ENCODE measurements at regions of chr18 and their contacts with region 1.

Region 1: GRCh38 chr18:57959278-57959677 is 84.7 kb upstream of the NEDD4L start:
- DNase-seq: peak; percentile 84
- H3K4me3 Mint-ChIP-seq: no peak overlapping the region
- H3K27ac Mint-ChIP-seq: no peak overlapping the region
- H3K4me1 Mint-ChIP-seq: peaks cover 6% of the 10 kb centered on the region
- H3K27me3 Mint-ChIP-seq: no peaks in the 10 kb centered on the region
- CTCF ChIP-seq: peak; percentile 53

Region 2: DNA sequence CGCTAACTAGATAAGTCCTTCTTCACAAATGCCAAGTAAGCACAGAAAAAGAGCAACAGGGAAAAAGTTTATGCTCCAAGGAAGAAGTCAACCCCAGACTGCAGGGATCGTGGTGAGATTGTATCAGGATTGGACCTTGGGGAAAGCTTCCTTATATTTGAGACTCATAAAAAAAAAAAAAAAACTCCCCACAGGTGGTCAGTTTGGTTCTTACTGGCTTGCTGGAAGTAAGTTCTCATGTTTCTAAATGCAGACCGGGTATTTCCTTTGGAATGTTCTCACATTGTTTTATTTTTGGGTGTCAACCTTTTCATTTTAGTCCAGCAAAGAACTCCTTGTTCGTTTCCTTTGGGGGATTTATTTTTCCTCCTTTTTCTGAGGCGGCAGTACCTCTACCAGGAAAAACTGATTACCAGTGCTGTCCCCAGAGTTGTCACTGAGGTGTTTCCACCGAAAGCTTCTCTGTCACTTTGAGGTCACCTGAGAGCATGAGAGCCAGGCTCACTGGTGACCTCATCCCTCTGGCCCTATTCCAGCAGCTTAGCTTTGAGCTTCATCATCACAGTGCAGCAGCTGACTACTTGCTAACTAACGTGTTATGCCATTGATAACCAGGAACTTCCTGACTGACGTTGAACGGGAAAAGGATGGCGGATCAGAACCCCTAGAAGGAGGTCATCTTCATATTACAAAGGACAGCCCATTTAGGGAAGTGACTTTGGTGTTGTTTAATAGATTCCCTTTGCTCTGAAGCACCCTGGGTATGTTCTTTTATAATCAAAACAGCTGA is 139.4 kb before region 1 on chr18:
- CTCF ChIA-PET with region 1: no interaction called
- POLR2A ChIA-PET with region 1: no interaction called
- intact Hi-C with region 1: no loop called
- DNase-seq: peak; percentile 81
- H3K4me3 Mint-ChIP-seq: peak overlapping the region; percentile 43
- H3K27ac Mint-ChIP-seq: peak overlapping the region; percentile 80
- H3K4me1 Mint-ChIP-seq: peaks cover 15% of the 10 kb centered on the region
- H3K27me3 Mint-ChIP-seq: no peaks in the 10 kb centered on the region
- CTCF ChIP-seq: no peak

Region 3: DNA sequence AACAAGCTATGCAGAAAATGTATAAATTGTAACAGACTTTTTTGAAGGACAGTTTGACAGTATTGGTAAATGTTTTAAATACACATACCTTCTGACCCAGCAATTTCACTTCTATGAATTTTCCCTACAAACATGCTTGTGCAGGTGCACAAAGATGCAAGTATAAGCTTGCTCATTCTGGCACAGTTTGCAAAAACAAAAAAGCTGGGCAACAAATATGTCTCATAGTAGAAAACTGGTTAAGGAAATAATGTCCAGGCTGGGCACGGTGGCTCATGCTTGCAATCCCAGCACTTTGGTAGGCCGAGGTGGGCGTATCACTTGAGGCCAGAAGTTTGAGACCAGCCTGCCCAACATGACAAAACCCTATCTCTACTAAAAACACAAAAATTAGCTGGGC is 12.2 kb before region 1 on chr18:
- CTCF ChIA-PET with region 1: interaction called, 11 read pairs
- POLR2A ChIA-PET with region 1: interaction called, 9 read pairs
- intact Hi-C with region 1: no loop called
- DNase-seq: peak; percentile 83
- H3K4me3 Mint-ChIP-seq: no peak overlapping the region
- H3K27ac Mint-ChIP-seq: no peak overlapping the region
- H3K4me1 Mint-ChIP-seq: peaks cover 17% of the 10 kb centered on the region
- H3K27me3 Mint-ChIP-seq: no peaks in the 10 kb centered on the region
- CTCF ChIP-seq: no peak

Region 4: DNA sequence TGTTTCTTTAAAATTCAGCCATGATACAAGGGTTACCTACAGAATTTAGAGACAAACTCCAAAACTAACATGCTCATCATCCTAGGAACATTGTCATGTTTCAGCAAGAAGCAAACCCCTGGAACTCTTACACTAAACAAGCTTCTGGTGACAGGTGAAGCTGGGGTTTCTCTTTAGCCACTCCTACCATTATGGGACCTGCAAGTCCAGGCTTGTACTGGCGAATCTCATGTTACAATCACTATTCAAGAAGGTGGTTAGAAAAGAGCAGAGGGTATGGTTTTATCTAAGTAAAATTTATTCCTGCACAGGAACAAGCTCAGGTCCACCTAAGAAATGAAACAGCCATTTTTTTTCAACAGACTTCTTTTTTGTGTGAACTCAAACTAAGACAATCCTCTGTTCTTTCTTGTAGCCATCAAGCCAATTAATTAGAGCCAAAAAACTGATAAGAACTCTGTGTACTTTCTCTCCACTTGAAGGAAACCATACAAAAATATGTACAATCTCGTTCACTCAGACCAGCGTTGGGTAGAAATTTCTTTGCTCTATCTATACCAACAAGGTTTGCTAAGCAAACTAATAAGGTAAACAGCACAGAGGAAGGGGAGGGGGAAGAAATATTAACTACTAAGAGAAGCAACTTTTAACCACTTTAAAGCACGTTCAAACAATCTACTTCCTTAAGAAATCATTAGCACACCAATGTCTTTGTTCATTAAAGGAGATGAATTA is 21.5 kb after region 1 on chr18:
- CTCF ChIA-PET with region 1: interaction called, 11 read pairs
- POLR2A ChIA-PET with region 1: interaction called, 4 read pairs
- intact Hi-C with region 1: no loop called
- DNase-seq: peak; percentile 55
- H3K4me3 Mint-ChIP-seq: no peak overlapping the region
- H3K27ac Mint-ChIP-seq: peak overlapping the region; percentile 30
- H3K4me1 Mint-ChIP-seq: peaks cover 16% of the 10 kb centered on the region
- H3K27me3 Mint-ChIP-seq: no peaks in the 10 kb centered on the region
- CTCF ChIP-seq: no peak

Region 5: DNA sequence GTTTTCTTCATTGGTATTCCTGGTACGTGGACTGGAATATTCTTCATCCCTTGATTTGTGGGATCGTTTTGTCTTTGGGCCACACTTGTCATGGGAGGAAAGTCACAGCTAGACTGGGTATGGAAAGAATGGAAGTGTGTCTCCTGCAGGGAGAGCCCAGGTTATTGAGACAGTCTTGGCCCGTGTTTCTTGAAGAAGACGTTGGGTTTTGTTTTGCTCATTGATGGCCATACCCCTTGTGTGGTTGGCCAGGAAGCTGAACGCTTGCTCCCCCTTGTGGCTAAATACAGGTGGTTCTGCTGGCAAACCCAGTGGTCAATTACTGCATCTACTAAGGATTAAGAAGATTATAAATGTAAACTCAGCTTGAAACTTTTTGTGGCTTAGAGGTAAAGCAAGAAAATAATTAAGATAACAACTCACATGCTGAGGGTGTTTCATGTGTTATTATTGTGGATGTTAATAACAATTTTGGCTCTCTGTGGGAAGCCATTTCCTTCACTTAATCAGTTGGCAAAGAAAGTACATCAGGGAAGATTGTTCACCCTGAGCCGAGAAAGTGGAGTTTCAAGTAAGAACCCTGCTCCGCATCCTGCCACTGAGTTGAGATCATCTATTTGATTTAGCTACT is 176.5 kb after region 1 on chr18:
- CTCF ChIA-PET with region 1: interaction called, 8 read pairs
- POLR2A ChIA-PET with region 1: no interaction called
- intact Hi-C with region 1: loop called (anchors 5 kb)
- DNase-seq: peak; percentile 85
- H3K4me3 Mint-ChIP-seq: no peak overlapping the region
- H3K27ac Mint-ChIP-seq: no peak overlapping the region
- H3K4me1 Mint-ChIP-seq: peaks cover 3% of the 10 kb centered on the region
- H3K27me3 Mint-ChIP-seq: no peaks in the 10 kb centered on the region
- CTCF ChIP-seq: peak; percentile 64

Region 6: DNA sequence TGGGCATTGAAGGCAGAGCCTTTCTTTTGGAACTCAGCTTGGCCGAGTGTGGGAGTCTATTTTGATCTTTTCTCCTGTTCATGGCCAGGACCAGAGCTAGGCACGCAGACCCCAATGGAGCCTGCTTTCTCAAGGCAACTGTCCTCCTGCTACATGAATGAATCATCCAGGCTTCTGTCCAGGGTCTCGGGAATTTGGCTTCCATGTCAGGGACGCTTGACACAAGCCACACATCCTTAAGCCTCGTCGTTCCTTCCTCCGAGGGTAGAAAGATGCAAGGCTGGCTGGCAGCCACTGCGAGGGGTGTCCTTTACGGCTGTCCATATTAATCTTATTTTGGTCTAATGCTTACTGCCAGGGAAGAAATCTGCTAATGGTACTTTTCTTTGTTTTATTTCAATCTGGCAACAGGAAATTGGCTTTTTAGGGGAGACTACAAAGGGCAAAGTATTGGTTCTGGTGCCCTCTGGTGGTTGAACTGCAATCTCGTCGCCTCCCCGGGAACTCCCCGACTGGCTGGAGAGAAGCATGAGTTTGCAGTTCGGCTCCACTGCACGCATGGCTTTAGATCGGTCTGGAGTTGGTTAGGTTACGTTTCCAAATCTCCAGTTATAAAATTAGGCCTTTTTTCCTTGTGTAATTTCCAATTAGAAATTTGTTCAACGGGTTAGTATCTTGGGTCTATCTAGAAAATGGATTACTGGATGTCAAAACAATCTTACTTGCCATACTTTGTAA is 534.4 kb after region 1 on chr18:
- CTCF ChIA-PET with region 1: no interaction called
- POLR2A ChIA-PET with region 1: no interaction called
- intact Hi-C with region 1: no loop called
- DNase-seq: peak; percentile 80
- H3K4me3 Mint-ChIP-seq: no peak overlapping the region
- H3K27ac Mint-ChIP-seq: no peak overlapping the region
- H3K4me1 Mint-ChIP-seq: no peaks in the 10 kb centered on the region
- H3K27me3 Mint-ChIP-seq: peaks cover 29% of the 10 kb centered on the region
- CTCF ChIP-seq: peak; percentile 78

Measured in MCF 10A (cell line).